ENCODE measurements at regions of chr1 and their contacts with region 1.

Region 1: DNA sequence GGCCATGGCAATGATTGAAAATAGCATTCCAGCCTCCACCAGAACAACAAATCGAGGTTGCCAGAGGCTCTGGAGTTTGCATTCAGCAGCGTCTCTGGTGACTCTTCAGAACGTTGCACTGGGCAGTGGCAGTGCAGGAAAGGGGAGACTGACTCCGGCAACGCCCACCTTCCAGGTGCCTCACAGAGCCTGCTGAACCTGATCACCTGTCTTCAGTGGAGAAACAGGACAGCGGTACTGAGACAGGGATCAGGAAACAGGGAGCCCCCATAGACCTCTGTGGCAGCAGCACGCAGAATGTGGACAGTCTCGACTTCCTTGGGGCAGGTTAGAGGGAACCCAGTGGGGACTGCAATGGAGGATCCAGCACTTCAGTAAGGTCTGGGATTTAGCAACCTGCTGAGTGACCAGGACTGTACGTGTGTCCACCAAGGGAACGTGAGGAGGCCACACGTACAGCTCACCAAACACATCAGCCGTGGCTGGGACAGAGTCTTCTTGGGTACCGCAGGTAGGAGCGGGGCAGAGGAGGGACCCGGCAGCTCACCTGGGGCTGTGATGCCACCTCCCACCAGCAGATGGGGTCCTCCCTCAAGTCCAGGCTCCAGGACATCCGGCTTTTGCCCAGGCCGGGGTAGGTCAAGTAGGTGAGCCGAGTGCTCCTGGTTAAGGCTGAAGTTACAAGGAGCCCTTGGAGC is 128.6 kb downstream of the PRDM2 start:
- DNase-seq: no peak
- ATAC-seq: peak in 2 of 8 donors; percentile 9 to 54
- H3K4me3 ChIP-seq: no peak overlapping the region
- H3K27ac ChIP-seq: no peak overlapping the region
- H3K4me1 ChIP-seq: peaks cover 0 to 6% (median 0%) of the 10 kb centered on the region in 9 donors
- H3K27me3 ChIP-seq: peaks cover 0 to 29% (median 5%) of the 10 kb centered on the region in 7 donors
- CTCF ChIP-seq: peak in 7 of 9 donors; percentile 34 to 57 (median 41)

Region 2: DNA sequence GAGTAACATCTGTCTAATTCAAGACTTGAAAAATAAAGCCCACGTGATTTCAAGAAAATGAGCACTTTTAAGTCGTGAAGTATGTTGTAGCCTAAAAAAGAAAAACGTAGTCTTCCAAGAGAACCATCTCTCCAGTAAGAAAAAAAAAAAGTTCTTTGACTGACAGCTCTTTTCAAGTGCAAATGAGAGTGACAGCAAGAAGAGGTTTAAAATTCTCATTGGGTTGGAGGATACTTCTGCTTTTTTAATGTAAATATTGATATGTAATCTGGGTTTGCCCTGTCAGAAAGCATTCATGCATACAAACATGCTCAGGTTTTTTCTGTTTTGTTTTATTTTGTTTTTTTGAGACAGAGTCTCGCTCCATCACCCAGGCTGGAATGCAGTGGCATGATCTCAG is 160.9 kb before region 1 on chr1:
- intact Hi-C with region 1: loop called in 5 of 10 experiments (anchors 5 to 10 kb)
- DNase-seq: no peak
- ATAC-seq: no peak
- H3K4me3 ChIP-seq: no peak overlapping the region
- H3K27ac ChIP-seq: no peak overlapping the region
- H3K4me1 ChIP-seq: peaks cover 0 to 13% (median 0%) of the 10 kb centered on the region in 9 donors
- H3K27me3 ChIP-seq: peaks cover 0 to 9% (median 0%) of the 10 kb centered on the region in 7 donors
- CTCF ChIP-seq: no peak

Region 3: GRCh38 chr1:13801232-13801631 is 27.4 kb before region 1 on chr1:
- intact Hi-C with region 1: no loop called
- DNase-seq: no peak
- ATAC-seq: peak in 3 of 8 donors; percentile 23 to 55 (median 50)
- H3K4me3 ChIP-seq: no peak overlapping the region
- H3K27ac ChIP-seq: no peak overlapping the region
- H3K4me1 ChIP-seq: peaks cover 0 to 19% (median 9%) of the 10 kb centered on the region in 9 donors
- H3K27me3 ChIP-seq: no peaks in the 10 kb centered on the region
- CTCF ChIP-seq: no peak

Region 4: DNA sequence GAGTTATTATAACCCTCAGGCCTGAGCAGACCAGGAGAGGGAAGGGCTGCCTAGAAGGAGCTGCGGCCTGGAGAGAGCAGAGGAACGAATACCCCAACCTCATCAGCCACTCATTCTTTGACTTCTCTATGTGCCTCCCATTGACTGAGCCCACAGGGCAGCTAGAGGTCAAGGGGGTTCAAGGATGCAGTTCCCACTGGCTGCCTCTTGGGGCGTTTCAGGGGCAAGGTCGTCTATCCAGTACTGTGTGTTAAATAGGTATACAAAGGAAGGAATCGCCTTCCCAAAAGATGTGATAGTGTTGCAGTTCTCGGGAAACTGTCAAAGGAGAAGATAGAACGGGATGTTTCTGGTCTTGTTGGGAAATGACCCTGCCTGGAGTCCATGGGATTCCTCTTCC is 122.0 kb after region 1 on chr1:
- intact Hi-C with region 1: loop called in 5 of 10 experiments (anchors 10 kb)
- DNase-seq: no peak
- ATAC-seq: no peak
- H3K4me3 ChIP-seq: no peak overlapping the region
- H3K27ac ChIP-seq: peak overlapping the region in 1 of 10 donors; percentile 63
- H3K4me1 ChIP-seq: no peaks in the 10 kb centered on the region
- H3K27me3 ChIP-seq: peaks cover 0 to 28% (median 0%) of the 10 kb centered on the region in 7 donors
- CTCF ChIP-seq: peak in 3 of 9 donors; percentile 14 to 26 (median 25)

Measured in heart right ventricle (tissue), 16 donors.